Transverse colon (tissue), 4 donors: ENCODE measurements at regions of chr19 and their contacts with region 1.

Region 1: GRCh38 chr19:4369888-4370260 is 26.5 kb downstream of the MPND start:
- DNase-seq: peak; percentile 76
- H3K4me3 ChIP-seq: peak overlapping the region in 2 of 4 donors; percentile 17 to 27
- H3K27ac ChIP-seq: peak overlapping the region; percentile 65 to 82 (median 77)
- H3K4me1 ChIP-seq: peaks cover 44 to 62% (median 55%) of the 10 kb centered on the region in 4 donors
- H3K27me3 ChIP-seq: no peaks in the 10 kb centered on the region
- CTCF ChIP-seq: peak; percentile 9 to 36 (median 25)
- EP300 ChIP-seq: no peak
- POLR2A ChIP-seq: no peak

Region 2: GRCh38 chr19:4400135-4400936 is 30.5 kb after region 1 on chr19 and contains the start of gene SH3GL1:
- in situ Hi-C with region 1: no loop called
- intact Hi-C with region 1: loop called (anchors 2 kb)
- DNase-seq: peak; percentile 95
- H3K4me3 ChIP-seq: peak within 1 kb of the TSS; percentile 90 to 99 (median 91)
- H3K27ac ChIP-seq: peak within 1 kb of the TSS; percentile 96 to 97 (median 97)
- H3K4me1 ChIP-seq: peaks cover 11 to 55% (median 38%) of the 10 kb centered on the region in 4 donors
- H3K27me3 ChIP-seq: no peaks in the 10 kb centered on the region
- CTCF ChIP-seq: peak; percentile 87 to 98 (median 95)
- EP300 ChIP-seq: no peak
- POLR2A ChIP-seq: peak; percentile 23
- total RNA-seq, gene SH3GL1: 16.5 to 63.2 (median 34.2) TPM

Region 3: DNA sequence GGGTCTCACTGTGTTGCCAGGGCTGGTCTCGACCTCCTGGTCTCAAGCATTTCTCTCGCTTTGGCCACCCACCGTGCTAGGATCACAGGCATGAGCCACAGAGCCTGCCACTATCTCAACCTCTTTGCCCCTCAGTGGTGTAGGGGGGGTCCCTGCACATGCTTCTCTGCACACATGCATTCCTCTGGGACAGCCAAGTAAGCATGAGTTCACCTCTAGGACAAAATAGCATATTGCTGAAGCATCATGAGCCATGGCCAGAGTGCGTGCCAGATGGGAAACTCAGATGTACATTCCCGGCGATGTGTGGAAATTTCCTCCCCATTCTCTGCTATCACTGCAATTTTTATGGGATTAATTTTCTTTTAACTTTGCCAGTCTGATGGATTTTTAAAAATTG is 55.7 kb after region 1 on chr19:
- in situ Hi-C with region 1: no loop called
- intact Hi-C with region 1: no loop called
- DNase-seq: no peak
- H3K4me3 ChIP-seq: no peak overlapping the region
- H3K27ac ChIP-seq: no peak overlapping the region
- H3K4me1 ChIP-seq: no peaks in the 10 kb centered on the region
- H3K27me3 ChIP-seq: no peaks in the 10 kb centered on the region
- CTCF ChIP-seq: no peak
- EP300 ChIP-seq: no peak
- POLR2A ChIP-seq: no peak